Mammary epithelial cell (primary cell): ENCODE measurements at regions of chr20 and their contacts with region 1.

Region 1: GRCh38 chr20:58209652-58210397 is 18.6 kb downstream of the ANKRD60 start:
- DNase-seq: peak; percentile 48
- H3K4me3 ChIP-seq: no peak overlapping the region
- H3K27ac ChIP-seq: no peak overlapping the region
- H3K4me1 ChIP-seq: no peaks in the 10 kb centered on the region
- H3K27me3 ChIP-seq: no peaks in the 10 kb centered on the region
- CTCF ChIP-seq: peak; percentile 100

Region 2: GRCh38 chr20:57383447-57384347 is 826.1 kb before region 1 on chr20:
- CTCF ChIA-PET with region 1: no interaction called
- dilution Hi-C with region 1: no loop called
- in situ Hi-C with region 1: loop called in 1 of 2 experiments (anchors 25 kb)
- intact Hi-C with region 1: loop called (anchors 5 kb)
- DNase-seq: no peak
- H3K4me3 ChIP-seq: no peak overlapping the region
- H3K27ac ChIP-seq: no peak overlapping the region
- H3K4me1 ChIP-seq: no peaks in the 10 kb centered on the region
- H3K27me3 ChIP-seq: no peaks in the 10 kb centered on the region
- CTCF ChIP-seq: no peak

Region 3: DNA sequence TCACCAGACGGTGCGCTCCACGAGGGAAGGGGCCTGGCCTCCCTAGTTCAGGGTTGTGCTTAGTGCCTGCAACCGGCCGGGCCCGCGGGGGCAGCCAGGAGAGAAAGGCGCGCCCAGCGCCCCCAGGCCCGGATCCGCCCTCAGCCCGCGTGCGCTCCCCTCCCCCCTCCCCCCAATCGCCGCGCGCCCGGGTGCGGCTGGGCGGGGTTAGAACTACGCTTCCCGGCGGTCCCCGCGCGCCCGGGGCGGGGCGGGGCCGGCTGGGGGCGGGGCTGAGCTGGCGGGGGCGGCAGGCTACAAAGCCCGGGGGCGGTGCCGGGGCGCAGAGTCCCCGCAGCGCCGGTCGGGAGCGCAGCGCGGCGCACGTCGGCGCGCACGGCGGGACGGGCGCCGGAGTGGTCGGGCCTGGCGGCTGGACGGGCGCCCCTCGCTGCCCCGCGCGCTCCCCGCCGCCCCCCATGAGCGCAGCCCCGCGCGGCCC is 818.7 kb before region 1 on chr20 and contains the start of gene RBM38:
- CTCF ChIA-PET with region 1: no interaction called
- dilution Hi-C with region 1: no loop called
- in situ Hi-C with region 1: loop called in 1 of 2 experiments (anchors 25 kb)
- intact Hi-C with region 1: no loop called
- DNase-seq: peak; percentile 34
- H3K4me3 ChIP-seq: peak within 1 kb of the TSS; percentile 68 to 80 (median 73)
- H3K27ac ChIP-seq: no peak within 1 kb of the TSS
- H3K4me1 ChIP-seq: peaks cover 38% of the 10 kb centered on the region
- H3K27me3 ChIP-seq: no peaks in the 10 kb centered on the region
- CTCF ChIP-seq: no peak
- total RNA-seq, gene RBM38: 16.2 to 21.2 TPM

Region 4: DNA sequence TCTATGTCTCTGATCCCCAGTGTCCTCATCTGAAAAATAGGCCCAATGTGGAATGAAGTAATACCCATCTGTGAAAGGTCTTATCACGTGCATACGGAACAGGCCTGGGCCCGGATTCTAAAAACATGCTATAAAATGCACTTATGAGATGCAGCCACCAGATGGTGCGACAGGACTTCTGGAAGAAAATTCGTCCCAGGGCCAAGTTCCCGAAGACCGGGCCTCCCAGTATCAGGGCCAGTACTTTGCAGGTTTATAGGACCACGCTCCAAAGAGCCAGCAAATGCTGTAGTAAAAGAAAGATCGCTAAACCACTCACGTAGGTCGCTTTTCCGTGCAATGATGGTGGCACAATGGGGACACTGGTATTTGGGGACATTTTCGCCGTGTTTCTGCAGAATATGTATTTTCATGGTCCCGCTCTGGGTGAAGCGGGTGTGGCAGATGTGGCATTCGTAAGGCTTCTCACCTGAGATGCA is 695.5 kb before region 1 on chr20:
- CTCF ChIA-PET with region 1: no interaction called
- dilution Hi-C with region 1: no loop called
- in situ Hi-C with region 1: loop called (anchors 5 kb)
- intact Hi-C with region 1: loop called (anchors 1 kb)
- DNase-seq: peak; percentile 57
- H3K4me3 ChIP-seq: no peak overlapping the region
- H3K27ac ChIP-seq: no peak overlapping the region
- H3K4me1 ChIP-seq: no peaks in the 10 kb centered on the region
- H3K27me3 ChIP-seq: no peaks in the 10 kb centered on the region
- CTCF ChIP-seq: peak; percentile 65 to 83

Region 5: DNA sequence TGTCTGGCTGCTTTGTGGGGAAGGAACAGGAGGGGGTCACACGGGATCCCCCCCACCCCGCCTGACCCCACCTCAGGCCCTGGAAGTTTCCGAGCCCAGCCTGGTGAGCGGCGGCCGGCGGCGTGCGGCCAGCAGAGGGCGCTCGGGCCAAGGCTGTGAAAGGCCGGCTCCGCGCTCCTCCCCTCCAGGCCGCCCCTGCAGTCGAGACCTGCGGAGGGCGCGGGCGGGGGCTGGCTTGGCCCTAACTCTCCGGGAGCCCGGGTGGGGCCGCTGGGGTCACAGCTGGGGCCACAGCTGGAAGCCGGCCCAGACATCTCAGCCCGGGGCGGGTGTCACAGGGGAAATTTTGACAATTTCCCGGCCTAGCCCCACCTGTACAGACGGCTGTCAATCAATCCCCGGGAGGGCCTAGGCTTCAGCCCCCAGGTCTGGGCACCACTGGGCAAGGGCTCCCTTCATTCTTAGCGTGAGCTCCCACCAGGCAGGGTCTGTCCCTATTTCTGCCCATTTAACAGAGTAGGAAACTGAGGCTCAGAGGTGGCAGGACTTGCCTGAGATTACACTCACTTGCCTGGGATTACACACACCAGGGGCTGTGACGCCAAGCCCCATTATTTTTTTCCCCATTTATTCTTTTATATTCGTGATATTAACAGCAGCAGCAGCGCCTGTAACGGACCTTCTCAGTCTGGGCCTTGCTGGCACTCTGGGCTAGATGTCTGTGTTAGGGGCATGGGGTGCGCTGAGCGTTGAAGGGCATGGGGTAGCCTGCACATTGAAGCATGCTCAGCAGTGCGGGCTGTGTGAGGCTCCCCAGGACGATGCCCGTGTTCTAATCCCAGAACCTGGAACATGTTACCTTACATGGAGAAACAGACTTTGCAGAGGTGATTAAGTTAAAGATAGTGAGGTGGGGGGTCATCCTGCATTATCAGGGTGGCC is 612.6 kb before region 1 on chr20:
- CTCF ChIA-PET with region 1: no interaction called
- dilution Hi-C with region 1: no loop called
- in situ Hi-C with region 1: loop called (anchors 5 kb)
- intact Hi-C with region 1: loop called (anchors 1 kb)
- DNase-seq: peak; percentile 24
- H3K4me3 ChIP-seq: no peak overlapping the region
- H3K27ac ChIP-seq: no peak overlapping the region
- H3K4me1 ChIP-seq: peaks cover 9% of the 10 kb centered on the region
- H3K27me3 ChIP-seq: no peaks in the 10 kb centered on the region
- CTCF ChIP-seq: peak; percentile 62 to 87

Region 6: DNA sequence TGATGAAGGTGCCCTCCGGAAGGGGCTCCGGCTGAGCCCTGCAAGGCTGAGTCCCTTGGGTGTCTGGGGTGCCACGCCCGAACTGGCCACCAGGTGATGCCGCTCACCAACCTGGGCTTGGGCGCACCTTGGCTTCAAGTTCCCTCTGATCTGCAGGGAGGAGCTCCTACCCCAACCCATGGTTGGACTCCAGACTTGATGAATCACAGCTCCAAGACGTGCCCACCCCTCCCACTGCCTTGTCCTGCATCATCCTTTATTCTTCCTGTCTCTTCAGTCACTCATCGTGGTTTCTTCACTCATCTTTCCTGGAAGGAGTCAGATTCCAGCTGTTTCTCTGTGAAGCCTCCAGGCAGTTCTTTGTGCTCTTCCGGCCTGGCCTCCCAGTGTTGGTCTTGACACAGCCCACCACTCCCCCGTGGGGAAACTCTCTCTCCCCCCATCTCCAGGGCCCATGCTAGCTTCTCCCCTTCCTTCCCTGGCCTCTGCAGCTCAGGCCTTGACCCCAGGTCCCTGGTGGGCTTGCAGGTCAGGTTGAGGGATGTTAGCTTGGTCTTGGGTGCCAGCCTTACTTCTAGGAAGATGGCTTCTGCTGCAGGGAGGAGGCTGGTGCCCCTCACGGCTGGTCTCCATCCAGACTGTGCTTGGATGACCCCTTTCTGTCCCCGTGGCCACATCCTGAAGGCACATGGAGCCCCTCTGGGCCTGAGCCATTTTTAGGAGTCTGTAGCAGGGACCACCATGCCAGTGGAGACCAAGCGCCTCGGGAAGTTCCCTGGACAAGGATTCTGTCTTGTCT is 587.0 kb before region 1 on chr20:
- CTCF ChIA-PET with region 1: interaction called, 6 read pairs
- dilution Hi-C with region 1: no loop called
- in situ Hi-C with region 1: no loop called
- intact Hi-C with region 1: loop called (anchors 1 kb)
- DNase-seq: peak; percentile 91
- H3K4me3 ChIP-seq: no peak overlapping the region
- H3K27ac ChIP-seq: no peak overlapping the region
- H3K4me1 ChIP-seq: peaks cover 22% of the 10 kb centered on the region
- H3K27me3 ChIP-seq: no peaks in the 10 kb centered on the region
- CTCF ChIP-seq: peak; percentile 99 to 100

Region 7: DNA sequence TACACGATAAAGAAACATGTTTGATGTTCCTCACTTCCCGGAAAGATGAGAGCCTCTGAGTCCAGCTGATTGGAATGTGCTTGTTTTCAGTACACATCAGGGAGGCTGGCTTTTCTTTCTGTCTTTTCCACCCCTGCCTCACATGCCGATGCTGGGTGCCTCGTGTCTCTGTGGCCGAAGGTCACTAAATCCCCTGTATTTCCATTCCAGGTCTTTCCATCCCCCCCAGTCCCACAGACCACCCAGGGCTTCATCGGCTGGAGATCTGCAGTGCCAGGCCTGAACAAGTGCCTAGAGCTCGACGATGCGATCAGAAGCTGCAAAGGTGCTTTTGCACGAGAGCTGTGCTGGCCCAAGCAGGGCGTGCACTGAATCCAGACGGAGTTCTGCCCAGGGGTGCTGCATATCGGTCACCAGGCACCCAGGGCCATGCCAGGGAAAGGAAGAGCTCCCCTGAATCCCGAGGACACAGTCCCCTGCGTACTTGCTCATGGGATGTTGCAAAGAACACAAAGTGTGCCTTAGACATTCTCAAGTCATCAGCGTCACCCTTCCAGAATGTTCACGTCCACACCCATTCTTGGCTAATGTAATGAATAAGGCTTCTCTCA is 49.3 kb before region 1 on chr20:
- CTCF ChIA-PET with region 1: no interaction called
- dilution Hi-C with region 1: no loop called
- in situ Hi-C with region 1: no loop called
- intact Hi-C with region 1: no loop called
- DNase-seq: no peak
- H3K4me3 ChIP-seq: no peak overlapping the region
- H3K27ac ChIP-seq: no peak overlapping the region
- H3K4me1 ChIP-seq: no peaks in the 10 kb centered on the region
- H3K27me3 ChIP-seq: no peaks in the 10 kb centered on the region
- CTCF ChIP-seq: no peak

Region 8: DNA sequence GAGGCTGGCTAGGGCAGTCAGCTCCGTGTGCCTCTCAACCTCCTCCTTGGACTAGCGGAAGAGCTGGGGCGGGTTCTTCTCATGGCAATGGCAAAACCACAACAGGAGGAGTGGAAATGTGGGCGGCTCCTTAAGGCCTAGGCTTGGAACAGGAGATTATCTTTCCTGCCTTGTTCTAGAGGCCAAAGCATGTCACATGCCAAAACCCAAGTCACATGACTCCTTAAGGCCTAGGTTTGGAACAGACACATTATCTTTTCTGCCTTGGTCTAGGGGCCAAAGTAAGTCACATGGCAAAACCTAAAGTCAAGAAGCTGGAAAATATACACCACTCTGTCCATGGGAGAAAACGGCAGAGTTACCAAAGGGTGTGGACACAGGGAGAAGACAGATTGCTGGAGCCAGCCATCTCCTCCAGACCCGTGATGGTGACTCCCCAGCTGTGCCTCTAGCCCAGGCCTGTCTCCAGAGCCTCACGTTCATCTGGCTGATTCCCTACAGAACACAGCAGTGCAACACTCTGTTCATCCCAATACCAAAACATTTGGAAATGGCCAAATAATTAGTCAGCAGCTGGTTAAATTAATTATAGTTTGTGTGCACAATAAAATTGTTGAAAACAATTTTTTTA is 15.5 kb before region 1 on chr20:
- CTCF ChIA-PET with region 1: no interaction called
- dilution Hi-C with region 1: no loop called
- in situ Hi-C with region 1: no loop called
- intact Hi-C with region 1: loop called (anchors 2 kb)
- DNase-seq: no peak
- H3K4me3 ChIP-seq: no peak overlapping the region
- H3K27ac ChIP-seq: no peak overlapping the region
- H3K4me1 ChIP-seq: no peaks in the 10 kb centered on the region
- H3K27me3 ChIP-seq: no peaks in the 10 kb centered on the region
- CTCF ChIP-seq: no peak